ENCODE measurements at regions of chr11 and their contacts with region 1.

Region 1: DNA sequence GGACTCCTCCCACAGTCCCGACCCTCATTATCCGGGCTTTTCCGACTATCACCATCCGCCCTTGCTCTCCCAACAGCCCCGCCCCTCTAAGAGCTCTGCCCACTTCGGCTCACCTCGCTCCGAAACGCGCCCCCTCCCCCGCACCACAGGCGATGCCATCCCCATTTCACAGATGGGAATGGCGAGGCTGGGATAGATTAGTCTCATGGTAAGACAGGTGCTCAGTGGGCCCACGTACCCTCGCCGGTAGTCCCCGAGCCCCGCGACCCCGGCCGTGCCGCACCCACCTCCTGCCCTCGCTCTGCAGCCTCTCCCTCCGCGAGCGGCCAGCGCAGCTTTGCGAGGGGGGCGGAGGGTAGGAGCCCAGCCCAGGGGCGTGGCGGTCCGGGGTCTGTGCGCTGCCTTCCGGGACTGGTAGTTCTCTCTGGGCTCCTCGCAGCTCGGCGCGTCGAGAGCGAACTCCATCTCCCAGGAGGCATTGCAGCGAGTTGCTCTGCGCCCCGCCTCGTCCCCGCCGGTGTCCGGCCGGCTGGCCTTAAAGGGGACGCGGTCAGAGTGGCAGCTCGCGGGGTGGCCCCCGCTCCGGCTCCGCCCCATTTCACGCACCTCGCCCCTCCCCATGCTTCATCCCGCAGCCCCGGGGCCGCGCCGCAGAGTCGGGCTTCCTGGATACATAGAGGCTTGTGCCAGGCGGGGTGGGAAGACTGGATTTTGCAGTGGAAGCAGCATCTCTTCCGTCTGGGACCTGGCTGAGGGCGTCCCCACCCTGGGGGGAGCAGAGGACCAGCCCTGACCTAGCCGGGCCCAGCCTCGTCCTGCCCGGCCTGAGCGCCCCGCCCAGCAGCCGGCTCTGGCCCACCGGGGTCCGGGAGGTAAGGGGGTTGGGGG is at the starts of genes KCTD21 and USP35:
- DNase-seq: peak; percentile 83 to 94 (median 87)
- ATAC-seq: peak; percentile 94
- H3K4me3 ChIP-seq: peak within 1 kb of the TSS; percentile 96
- H3K4me3 Mint-ChIP-seq: peak within 1 kb of the TSS; percentile 90 to 100 (median 98)
- H3K27ac ChIP-seq: peak within 1 kb of the TSS; percentile 85
- H3K27ac Mint-ChIP-seq: peak within 1 kb of the TSS; percentile 87 to 99 (median 97)
- H3K4me1 ChIP-seq: peaks cover 15 to 49% of the 10 kb centered on the region in 2 donors
- H3K4me1 Mint-ChIP-seq: peaks cover 37 to 59% (median 56%) of the 10 kb centered on the region in 7 donors
- H3K27me3 ChIP-seq: no peaks in the 10 kb centered on the region
- H3K27me3 Mint-ChIP-seq: no peaks in the 10 kb centered on the region
- total RNA-seq, gene KCTD21: 3.5 to 12.2 (median 6.5) TPM
- total RNA-seq, gene USP35: 11.3 to 19.2 (median 15.2) TPM

Region 2: DNA sequence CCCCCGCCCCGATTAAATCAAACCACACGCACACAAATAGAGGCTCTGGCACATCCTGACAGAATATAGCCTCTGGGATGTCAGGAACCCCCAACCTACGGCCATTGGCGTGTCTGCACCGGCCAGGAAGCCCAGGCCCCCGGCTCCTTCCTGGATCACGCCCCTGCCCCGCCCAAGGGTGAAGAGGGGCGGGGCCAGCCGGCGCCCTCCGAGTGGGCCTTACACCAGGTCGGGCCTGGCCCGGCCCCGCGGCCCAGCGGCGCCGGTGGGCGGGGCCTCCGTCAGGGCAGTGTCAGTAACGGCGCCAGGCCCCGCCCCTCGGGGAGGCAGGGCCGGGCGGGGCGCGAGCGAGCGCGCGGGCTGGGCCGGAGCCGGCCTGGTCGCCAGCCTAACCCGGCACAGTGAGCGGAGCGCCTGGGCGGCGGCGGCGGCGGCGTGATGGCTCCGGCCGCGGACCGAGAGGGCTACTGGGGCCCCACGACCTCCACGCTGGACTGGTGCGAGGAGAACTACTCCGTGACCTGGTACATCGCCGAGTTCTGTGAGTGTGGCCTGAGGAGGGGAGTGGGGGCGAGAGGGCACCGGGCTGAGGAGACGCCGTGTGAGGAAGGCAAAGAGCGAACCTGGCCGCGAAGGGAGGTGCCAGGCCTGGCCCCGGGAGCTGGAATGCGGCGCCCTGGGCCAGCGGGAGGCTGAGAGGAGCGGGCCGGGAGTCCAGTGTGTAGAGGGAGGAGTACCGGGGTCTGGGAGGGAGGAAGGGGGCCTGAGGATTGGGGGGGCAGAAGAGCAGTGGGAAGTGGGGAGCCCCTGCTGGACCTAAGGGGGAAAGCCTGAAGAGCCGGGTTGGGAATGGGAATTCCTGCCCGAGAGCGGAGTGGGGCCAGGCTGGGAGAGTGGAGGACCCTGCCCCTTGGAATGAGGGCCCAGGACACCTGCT is 1327.7 kb before region 1 on chr11 and contains the start of gene ACER3:
- CTCF ChIA-PET with region 1: no interaction called
- POLR2A ChIA-PET with region 1: no interaction called
- intact Hi-C with region 1: loop called in 1 of 2 experiments (anchors 5 kb)
- DNase-seq: peak; percentile 36 to 95 (median 61)
- ATAC-seq: peak; percentile 98
- H3K4me3 ChIP-seq: peak within 1 kb of the TSS; percentile 57
- H3K4me3 Mint-ChIP-seq: peak within 1 kb of the TSS; percentile 80 to 92 (median 88)
- H3K27ac ChIP-seq: peak within 1 kb of the TSS; percentile 72
- H3K27ac Mint-ChIP-seq: peak within 1 kb of the TSS; percentile 73 to 95 (median 85)
- H3K4me1 ChIP-seq: peaks cover 9 to 11% of the 10 kb centered on the region in 2 donors
- H3K4me1 Mint-ChIP-seq: peaks cover 19 to 36% (median 28%) of the 10 kb centered on the region in 7 donors
- H3K27me3 ChIP-seq: no peaks in the 10 kb centered on the region
- H3K27me3 Mint-ChIP-seq: no peaks in the 10 kb centered on the region
- total RNA-seq, gene ACER3: 4.7 to 15.2 (median 9.0) TPM

Region 3: GRCh38 chr11:77994412-77995362 is 193.8 kb before region 1 on chr11 and contains the start of gene INTS4:
- CTCF ChIA-PET with region 1: no interaction called
- POLR2A ChIA-PET with region 1: interaction called, 8 read pairs
- intact Hi-C with region 1: loop called (anchors 1 kb)
- DNase-seq: peak; percentile 88 to 99 (median 99)
- ATAC-seq: peak; percentile 98
- H3K4me3 ChIP-seq: peak within 1 kb of the TSS; percentile 88
- H3K4me3 Mint-ChIP-seq: peak within 1 kb of the TSS; percentile 87 to 96 (median 94)
- H3K27ac ChIP-seq: peak within 1 kb of the TSS; percentile 84
- H3K27ac Mint-ChIP-seq: peak within 1 kb of the TSS; percentile 86 to 99 (median 97)
- H3K4me1 ChIP-seq: peaks cover 16 to 18% of the 10 kb centered on the region in 2 donors
- H3K4me1 Mint-ChIP-seq: peaks cover 10 to 45% (median 28%) of the 10 kb centered on the region in 7 donors
- H3K27me3 ChIP-seq: no peaks in the 10 kb centered on the region
- H3K27me3 Mint-ChIP-seq: no peaks in the 10 kb centered on the region
- total RNA-seq, gene INTS4: 54.4 to 87.0 (median 65.0) TPM

Region 4: GRCh38 chr11:78139422-78140391 is 48.8 kb before region 1 on chr11 and contains the start of gene ALG8:
- CTCF ChIA-PET with region 1: no interaction called
- POLR2A ChIA-PET with region 1: interaction called, 13 read pairs
- intact Hi-C with region 1: loop called (anchors 1 kb)
- DNase-seq: peak; percentile 94 to 97 (median 96)
- ATAC-seq: peak; percentile 95
- H3K4me3 ChIP-seq: peak within 1 kb of the TSS; percentile 88
- H3K4me3 Mint-ChIP-seq: peak within 1 kb of the TSS; percentile 85 to 98 (median 95)
- H3K27ac ChIP-seq: peak within 1 kb of the TSS; percentile 82
- H3K27ac Mint-ChIP-seq: peak within 1 kb of the TSS; percentile 87 to 98 (median 93)
- H3K4me1 ChIP-seq: peaks cover 8 to 13% of the 10 kb centered on the region in 2 donors
- H3K4me1 Mint-ChIP-seq: peaks cover 23 to 51% (median 42%) of the 10 kb centered on the region in 7 donors
- H3K27me3 ChIP-seq: no peaks in the 10 kb centered on the region
- H3K27me3 Mint-ChIP-seq: no peaks in the 10 kb centered on the region
- total RNA-seq, gene ALG8: 27.2 to 53.8 (median 30.8) TPM

Region 5: DNA sequence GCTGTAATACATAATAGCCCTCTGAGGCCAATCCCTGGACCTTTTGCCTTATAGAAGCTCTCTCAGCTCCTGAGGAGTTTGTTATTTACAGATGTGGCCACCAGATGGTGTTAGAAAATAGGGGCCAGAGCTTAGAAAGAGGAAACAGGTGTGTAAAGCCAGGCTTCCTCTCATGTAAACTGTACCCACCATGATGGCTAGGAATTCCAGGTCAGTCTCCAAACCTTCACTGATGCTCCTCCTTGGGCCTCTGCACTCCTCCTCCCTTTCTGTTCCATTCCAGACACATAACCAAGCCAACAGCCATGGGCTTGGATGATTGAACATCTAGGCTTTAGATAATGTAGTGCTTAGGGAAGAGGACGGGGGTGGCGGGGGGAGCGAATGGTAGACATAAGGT is 39.9 kb after region 1 on chr11:
- CTCF ChIA-PET with region 1: interaction called, 3 read pairs
- POLR2A ChIA-PET with region 1: no interaction called
- intact Hi-C with region 1: loop called in 1 of 2 experiments (anchors 1 kb)
- DNase-seq: peak in 2 of 9 donors; percentile 18 to 21
- ATAC-seq: peak; percentile 76
- H3K4me3 ChIP-seq: no peak overlapping the region
- H3K4me3 Mint-ChIP-seq: no peak overlapping the region
- H3K27ac ChIP-seq: no peak overlapping the region
- H3K27ac Mint-ChIP-seq: peak overlapping the region in 2 of 9 donors; percentile 57 to 65
- H3K4me1 ChIP-seq: no peaks in the 10 kb centered on the region
- H3K4me1 Mint-ChIP-seq: peaks cover 6 to 61% (median 9%) of the 10 kb centered on the region in 7 donors
- H3K27me3 ChIP-seq: no peaks in the 10 kb centered on the region
- H3K27me3 Mint-ChIP-seq: no peaks in the 10 kb centered on the region

Region 6: DNA sequence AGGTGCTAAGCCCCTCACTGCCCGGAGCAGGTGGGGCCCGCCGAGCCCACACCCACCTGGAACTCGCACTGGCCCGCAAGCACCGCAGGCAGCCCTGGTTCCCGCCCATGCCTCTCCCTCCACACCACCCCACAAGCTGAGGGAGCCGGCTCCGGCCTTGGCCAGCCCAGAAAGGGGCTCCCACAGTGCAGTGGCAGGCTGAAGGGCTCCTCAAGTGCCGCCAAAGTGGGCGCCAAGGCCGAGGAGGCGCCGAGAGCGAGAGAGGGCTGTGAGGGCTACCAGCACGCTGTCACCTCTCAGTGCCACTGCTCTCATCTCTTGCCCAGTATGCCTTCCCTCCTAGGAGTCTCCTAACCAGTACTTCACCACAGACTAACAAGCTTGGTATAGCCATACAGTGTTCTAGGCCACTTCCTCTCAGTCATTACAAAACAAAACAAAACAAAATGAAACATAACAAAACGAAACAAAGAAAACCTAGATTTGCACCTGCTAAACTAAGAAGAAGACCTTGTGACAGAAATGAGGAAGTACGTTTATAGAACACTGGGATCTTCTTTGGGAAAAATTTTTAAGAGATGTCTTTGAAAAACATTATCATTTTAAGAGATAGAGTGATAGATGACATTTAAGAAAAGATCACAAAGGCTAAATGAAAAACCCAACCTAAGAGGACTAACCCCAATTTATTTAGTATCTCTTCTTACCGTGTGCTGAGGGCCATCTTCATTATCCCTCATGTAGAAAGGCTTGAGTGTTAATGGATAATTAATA is 276.8 kb after region 1 on chr11:
- CTCF ChIA-PET with region 1: no interaction called
- POLR2A ChIA-PET with region 1: no interaction called
- intact Hi-C with region 1: loop called in 1 of 2 experiments (anchors 1 kb)
- DNase-seq: peak in 6 of 9 donors; percentile 16 to 55 (median 26)
- ATAC-seq: peak; percentile 93
- H3K4me3 ChIP-seq: no peak overlapping the region
- H3K4me3 Mint-ChIP-seq: peak overlapping the region; percentile 37 to 81 (median 64)
- H3K27ac ChIP-seq: peak overlapping the region; percentile 3
- H3K27ac Mint-ChIP-seq: peak overlapping the region; percentile 54 to 95 (median 79)
- H3K4me1 ChIP-seq: peaks cover 4 to 5% of the 10 kb centered on the region in 2 donors
- H3K4me1 Mint-ChIP-seq: peaks cover 12 to 44% (median 17%) of the 10 kb centered on the region in 7 donors
- H3K27me3 ChIP-seq: no peaks in the 10 kb centered on the region
- H3K27me3 Mint-ChIP-seq: no peaks in the 10 kb centered on the region

Measured in naive thymus-derived CD4-positive, alpha-beta T cell (primary cell).